ENCODE measurements at regions of chr12 and their contacts with region 1.

Region 1: GRCh38 chr12:55073043-55074022 is 52.9 kb upstream of the OR9K2 start:
- DNase-seq: peak; percentile 92
- H3K4me3 Mint-ChIP-seq: no peak overlapping the region
- H3K27ac Mint-ChIP-seq: no peak overlapping the region
- H3K4me1 Mint-ChIP-seq: peaks cover 9% of the 10 kb centered on the region
- H3K27me3 Mint-ChIP-seq: peaks cover 31% of the 10 kb centered on the region

Region 2: DNA sequence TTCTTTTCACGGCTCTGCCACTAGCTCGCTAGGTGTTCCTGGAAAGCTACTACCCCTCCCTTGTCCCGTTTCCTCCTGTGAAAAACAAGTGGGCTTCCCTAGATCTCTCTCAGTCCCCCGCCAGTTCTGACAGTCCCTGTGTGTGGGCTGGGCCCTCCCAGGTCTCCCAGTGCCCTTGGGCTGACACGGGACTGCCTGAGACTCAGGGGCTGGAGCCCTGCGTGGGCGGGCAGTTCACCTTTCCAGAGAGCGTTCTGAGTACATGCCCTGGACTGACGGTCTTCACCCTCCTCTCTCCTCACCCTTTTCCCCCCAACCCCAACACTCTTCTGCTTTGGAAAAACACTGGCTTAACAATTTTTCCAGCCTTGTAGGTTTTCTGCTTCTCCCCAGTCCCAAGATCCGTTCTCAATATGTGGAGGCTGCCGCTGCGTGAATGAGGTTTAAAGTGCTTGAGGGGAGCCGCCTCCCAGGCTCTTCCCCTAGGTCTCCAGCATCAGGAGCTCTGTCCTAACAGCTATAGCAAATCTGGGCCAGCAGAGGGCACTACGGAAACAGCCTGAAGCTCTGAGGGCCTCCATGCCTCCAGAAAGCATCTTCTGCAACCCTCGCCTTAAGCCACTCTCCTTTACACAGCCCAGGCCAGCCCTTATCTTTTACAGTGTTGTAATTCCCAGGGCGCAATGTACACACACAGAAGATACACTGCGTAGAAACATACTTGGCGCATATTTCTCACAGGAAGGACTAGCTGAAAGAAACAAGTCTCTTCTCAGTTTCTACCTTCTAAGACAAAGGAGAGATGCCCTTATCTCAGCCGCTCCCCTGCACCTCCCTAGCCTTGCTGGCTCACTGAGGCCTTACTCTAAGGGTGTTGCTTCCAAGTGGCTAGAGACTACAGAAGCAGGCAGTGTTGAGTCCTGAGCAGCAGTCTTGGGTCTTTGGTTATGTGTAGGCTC is 414.7 kb before region 1 on chr12:
- intact Hi-C with region 1: loop called (anchors 5 kb)
- DNase-seq: peak; percentile 81
- H3K4me3 Mint-ChIP-seq: no peak overlapping the region
- H3K27ac Mint-ChIP-seq: no peak overlapping the region
- H3K4me1 Mint-ChIP-seq: no peaks in the 10 kb centered on the region
- H3K27me3 Mint-ChIP-seq: peaks cover 14% of the 10 kb centered on the region

Region 3: GRCh38 chr12:54723379-54724256 is 349.7 kb before region 1 on chr12:
- intact Hi-C with region 1: loop called (anchors 1 kb)
- DNase-seq: peak; percentile 82
- H3K4me3 Mint-ChIP-seq: no peak overlapping the region
- H3K27ac Mint-ChIP-seq: no peak overlapping the region
- H3K4me1 Mint-ChIP-seq: peaks cover 5% of the 10 kb centered on the region
- H3K27me3 Mint-ChIP-seq: peaks cover 35% of the 10 kb centered on the region

Region 4: DNA sequence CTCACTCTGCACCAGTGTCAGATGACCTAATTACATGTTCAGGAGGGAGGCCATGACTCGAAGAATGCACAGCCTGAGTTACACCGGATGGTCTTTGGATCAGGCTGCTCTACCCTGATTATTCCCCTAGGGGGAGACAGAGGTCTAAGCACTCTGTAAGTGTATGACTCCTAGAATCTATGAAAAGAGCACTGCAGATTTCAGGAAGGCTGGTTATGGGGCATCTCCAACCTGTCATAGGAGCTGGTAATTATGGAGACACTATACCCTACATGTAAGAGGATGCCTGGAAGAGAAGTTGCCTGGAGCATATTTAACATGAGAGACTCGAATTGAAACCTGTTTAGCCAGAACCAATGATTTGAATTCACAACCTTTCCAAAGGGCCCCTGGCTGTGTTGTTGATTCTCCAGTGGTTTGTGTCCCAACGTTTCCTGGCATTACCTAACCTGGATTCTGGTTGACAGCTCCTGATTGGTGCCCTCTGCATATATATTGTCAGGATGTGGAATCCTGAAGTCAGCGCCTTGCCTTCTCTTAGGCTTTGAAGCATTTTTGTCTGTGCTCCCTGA is 219.3 kb before region 1 on chr12 and contains the start of gene MUCL1:
- intact Hi-C with region 1: loop called (anchors 1 kb)
- DNase-seq: peak; percentile 93
- H3K4me3 Mint-ChIP-seq: no peak within 1 kb of the TSS
- H3K27ac Mint-ChIP-seq: no peak within 1 kb of the TSS
- H3K4me1 Mint-ChIP-seq: peaks cover 20% of the 10 kb centered on the region
- H3K27me3 Mint-ChIP-seq: peaks cover 5% of the 10 kb centered on the region
- total RNA-seq, gene MUCL1: 0.54 and 0.84 TPM in 2 replicates